Endothelial cell of umbilical vein (primary cell): ENCODE measurements at regions of chr21 and their contacts with region 1.

Region 1: DNA sequence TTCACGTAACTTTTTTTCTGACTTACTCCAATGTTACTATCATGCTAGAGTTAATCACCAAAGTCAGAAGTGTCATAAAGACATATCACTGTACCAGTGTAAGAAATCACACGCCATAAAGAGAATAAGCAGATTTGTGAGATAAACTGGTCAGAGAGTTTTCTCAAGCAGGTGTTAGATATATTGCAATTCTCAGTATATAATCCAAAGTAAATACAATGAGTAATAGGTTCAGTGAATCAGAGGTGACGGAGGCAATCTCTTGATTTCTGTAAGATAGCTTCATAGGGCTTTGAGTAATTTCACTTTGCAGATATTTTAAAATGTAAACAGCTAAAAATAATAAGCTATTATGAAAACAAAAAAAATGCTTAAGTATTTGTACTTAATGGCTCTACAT is 118.8 kb downstream of the USP25 start:
- DNase-seq: peak; percentile 92
- H3K4me3 ChIP-seq: no peak overlapping the region
- H3K27ac ChIP-seq: peak overlapping the region; percentile 69
- H3K4me1 ChIP-seq: peaks cover 56% of the 10 kb centered on the region
- H3K27me3 ChIP-seq: no peaks in the 10 kb centered on the region
- CTCF ChIP-seq: no peak
- POLR2A ChIP-seq: peak; percentile 48

Region 2: GRCh38 chr21:15638856-15639549 is 209.6 kb before region 1 on chr21:
- CTCF ChIA-PET with region 1: no interaction called
- POLR2A ChIA-PET with region 1: no interaction called
- dilution Hi-C with region 1: no loop called
- intact Hi-C with region 1: no loop called
- DNase-seq: no peak
- H3K4me3 ChIP-seq: no peak overlapping the region
- H3K27ac ChIP-seq: no peak overlapping the region
- H3K4me1 ChIP-seq: no peaks in the 10 kb centered on the region
- H3K27me3 ChIP-seq: no peaks in the 10 kb centered on the region
- CTCF ChIP-seq: no peak
- POLR2A ChIP-seq: no peak

Region 3: DNA sequence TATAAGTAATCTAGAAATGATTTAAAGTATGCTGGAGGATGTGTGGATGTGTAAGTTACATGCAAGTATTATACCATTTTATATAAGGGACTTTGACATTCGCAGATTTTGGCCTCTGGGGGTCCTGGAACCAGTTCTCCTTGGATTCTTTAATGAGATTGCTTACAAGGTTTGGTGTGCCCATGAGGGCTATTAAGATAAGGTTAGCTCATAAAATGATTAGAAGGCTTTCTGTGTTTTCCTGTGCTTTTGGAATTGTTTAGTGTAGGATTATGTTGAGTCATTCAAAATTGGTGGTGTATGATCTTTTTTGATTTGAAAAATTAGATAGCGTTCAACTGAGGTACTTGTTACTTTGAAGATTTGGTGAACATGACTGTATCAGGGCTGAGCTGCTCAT is 113.2 kb before region 1 on chr21:
- CTCF ChIA-PET with region 1: no interaction called
- POLR2A ChIA-PET with region 1: no interaction called
- dilution Hi-C with region 1: no loop called
- intact Hi-C with region 1: loop called (anchors 1 kb)
- DNase-seq: peak; percentile 60
- H3K4me3 ChIP-seq: peak overlapping the region in 1 of 3 experiments; percentile 32
- H3K27ac ChIP-seq: peak overlapping the region; percentile 42
- H3K4me1 ChIP-seq: peaks cover 54% of the 10 kb centered on the region
- H3K27me3 ChIP-seq: no peaks in the 10 kb centered on the region
- CTCF ChIP-seq: no peak
- POLR2A ChIP-seq: no peak

Region 4: DNA sequence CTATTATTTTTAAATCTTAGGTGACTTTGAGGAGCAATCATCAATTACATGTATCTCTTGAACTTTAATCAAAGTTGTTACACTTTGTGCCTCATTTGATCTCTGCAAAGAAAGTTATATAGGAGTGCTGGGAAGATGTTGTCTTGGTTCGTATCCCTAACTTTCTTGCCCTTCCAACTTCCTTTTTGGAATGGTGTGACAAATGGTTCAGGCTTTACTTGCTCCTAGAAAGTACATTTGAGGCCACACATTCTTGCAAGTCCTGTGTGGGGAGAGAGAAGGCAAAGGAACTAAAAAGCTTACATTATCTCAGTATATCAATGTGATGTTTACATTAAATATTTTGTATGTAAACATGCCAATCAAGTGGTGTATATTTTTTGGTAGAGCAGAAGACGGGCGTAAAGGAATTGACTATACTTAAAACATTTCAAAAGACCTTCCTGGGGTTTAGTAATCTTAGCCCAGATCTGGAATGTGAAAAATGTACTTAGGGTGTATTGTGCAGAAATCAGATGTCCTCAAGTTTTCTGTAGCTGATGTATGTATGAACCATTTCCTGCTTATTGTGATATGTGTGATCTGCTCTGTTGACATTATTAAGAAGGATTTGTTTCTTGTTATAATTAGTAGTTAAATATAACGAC is 59.7 kb before region 1 on chr21:
- CTCF ChIA-PET with region 1: no interaction called
- POLR2A ChIA-PET with region 1: no interaction called
- dilution Hi-C with region 1: no loop called
- intact Hi-C with region 1: loop called (anchors 2 kb)
- DNase-seq: peak; percentile 64
- H3K4me3 ChIP-seq: peak overlapping the region in 1 of 3 experiments; percentile 33
- H3K27ac ChIP-seq: peak overlapping the region; percentile 57
- H3K4me1 ChIP-seq: peaks cover 31% of the 10 kb centered on the region
- H3K27me3 ChIP-seq: no peaks in the 10 kb centered on the region
- CTCF ChIP-seq: no peak
- POLR2A ChIP-seq: no peak

Region 5: GRCh38 chr21:15809818-15810217 is 38.8 kb before region 1 on chr21:
- CTCF ChIA-PET with region 1: no interaction called
- POLR2A ChIA-PET with region 1: no interaction called
- dilution Hi-C with region 1: no loop called
- intact Hi-C with region 1: no loop called
- DNase-seq: no peak
- H3K4me3 ChIP-seq: no peak overlapping the region
- H3K27ac ChIP-seq: no peak overlapping the region
- H3K4me1 ChIP-seq: no peaks in the 10 kb centered on the region
- H3K27me3 ChIP-seq: no peaks in the 10 kb centered on the region
- CTCF ChIP-seq: no peak
- POLR2A ChIP-seq: no peak